Activated CD8-positive, alpha-beta T cell treated with anti-CD3 and anti-CD28 coated beads, Interleukin-2, amount 10 ng/mL, durations not matched to agents 7 days and 5 days (primary cell): ENCODE measurements at regions of chr19 and their contacts with region 1.

Region 1: GRCh38 chr19:5547881-5548280 is 19.9 kb downstream of the TINCR start:
- DNase-seq: peak; percentile 47
- ATAC-seq: peak; percentile 51
- H3K4me3 Mint-ChIP-seq: no peak overlapping the region
- H3K27ac Mint-ChIP-seq: no peak overlapping the region
- H3K4me1 Mint-ChIP-seq: peaks cover 2% of the 10 kb centered on the region
- H3K27me3 Mint-ChIP-seq: no peaks in the 10 kb centered on the region

Region 2: GRCh38 chr19:5563941-5564612 is 16.2 kb after region 1 on chr19:
- CTCF ChIA-PET with region 1: no interaction called
- POLR2A ChIA-PET with region 1: no interaction called
- DNase-seq: no peak
- ATAC-seq: no peak
- H3K4me3 Mint-ChIP-seq: no peak overlapping the region
- H3K27ac Mint-ChIP-seq: no peak overlapping the region
- H3K4me1 Mint-ChIP-seq: no peaks in the 10 kb centered on the region
- H3K27me3 Mint-ChIP-seq: peaks cover 7% of the 10 kb centered on the region

Region 3: DNA sequence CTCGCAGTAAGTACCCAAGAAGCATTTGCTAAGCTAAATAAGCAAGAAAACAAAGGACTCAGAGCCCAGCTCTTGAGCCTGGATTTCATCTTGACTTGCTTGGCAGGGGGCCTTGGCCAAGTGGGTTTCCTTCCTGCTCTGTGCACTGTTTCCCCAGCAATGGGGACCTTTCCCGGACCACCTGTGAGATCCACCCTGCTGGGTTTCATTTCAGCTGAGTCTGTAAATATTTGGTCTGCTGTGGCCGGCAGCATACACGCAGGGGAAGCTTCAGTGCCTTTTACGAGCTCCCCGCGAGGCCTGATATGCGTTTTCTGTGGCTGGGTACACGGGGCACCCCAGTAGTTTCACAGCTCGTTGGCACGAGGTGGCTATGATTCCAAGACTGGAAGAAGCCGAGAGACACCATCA is 32.3 kb after region 1 on chr19:
- CTCF ChIA-PET with region 1: interaction called, 11 read pairs
- POLR2A ChIA-PET with region 1: no interaction called
- DNase-seq: no peak
- ATAC-seq: no peak
- H3K4me3 Mint-ChIP-seq: no peak overlapping the region
- H3K27ac Mint-ChIP-seq: no peak overlapping the region
- H3K4me1 Mint-ChIP-seq: peaks cover 4% of the 10 kb centered on the region
- H3K27me3 Mint-ChIP-seq: no peaks in the 10 kb centered on the region